Panc1 (cell line): ENCODE measurements at regions of chr13 and their contacts with region 1.

Region 1: DNA sequence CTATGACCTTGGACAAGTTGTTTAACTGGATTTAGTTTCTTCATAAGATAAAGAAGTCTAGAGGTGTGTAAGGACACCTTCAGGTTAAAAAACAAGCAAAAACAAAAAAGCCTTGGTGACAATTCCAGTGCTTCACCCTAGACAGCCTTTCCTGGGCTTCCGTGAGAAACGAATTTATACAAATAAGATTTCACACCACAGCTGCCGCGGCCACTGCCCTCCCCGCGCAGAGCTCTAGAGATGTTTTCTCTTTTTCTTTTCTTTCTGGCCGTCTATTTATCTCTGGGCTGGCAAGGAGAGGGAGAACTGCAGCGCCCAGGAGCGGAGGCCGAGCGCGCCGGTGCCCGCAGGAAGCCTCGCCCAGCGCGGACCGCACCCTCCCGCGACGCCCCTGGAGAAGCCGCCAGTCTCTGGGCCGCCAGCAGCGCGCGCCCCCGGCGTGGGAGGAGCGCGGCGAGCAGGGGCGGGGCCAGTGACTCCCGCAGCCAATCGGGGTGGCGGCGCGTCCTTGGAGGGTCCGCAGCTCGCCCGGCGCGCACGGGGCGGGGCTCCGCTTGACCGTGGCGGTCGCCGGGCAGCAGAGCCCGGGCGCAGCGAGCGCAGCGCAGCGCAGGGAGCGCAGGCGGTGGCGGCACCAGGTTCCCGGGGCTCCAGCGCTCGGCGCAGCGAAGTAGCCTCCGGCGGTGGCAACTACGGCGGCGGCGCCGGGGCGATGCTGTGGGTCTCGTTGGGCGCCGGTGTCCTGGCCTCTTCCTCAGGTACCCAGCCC is 107.0 kb downstream of the RXFP2 start:
- DNase-seq: no peak
- ATAC-seq: peak; percentile 100
- H3K4me3 ChIP-seq: peak overlapping the region; percentile 49 to 53
- H3K27ac ChIP-seq: no peak overlapping the region
- H3K4me1 ChIP-seq: no peaks in the 10 kb centered on the region
- H3K27me3 ChIP-seq: peaks cover 2% of the 10 kb centered on the region; the same call in 1 of the 2 replicates
- CTCF ChIP-seq: no peak

Region 2: GRCh38 chr13:31930901-31931522 is 84.6 kb after region 1 on chr13:
- CTCF ChIA-PET with region 1: no interaction called
- POLR2A ChIA-PET with region 1: no interaction called
- in situ Hi-C with region 1: no loop called
- intact Hi-C with region 1: no loop called
- DNase-seq: no peak
- ATAC-seq: peak; percentile 47
- H3K4me3 ChIP-seq: no peak overlapping the region
- H3K27ac ChIP-seq: peak overlapping the region; percentile 69
- H3K4me1 ChIP-seq: peaks cover 20% of the 10 kb centered on the region
- H3K27me3 ChIP-seq: no peaks in the 10 kb centered on the region
- CTCF ChIP-seq: no peak

Region 3: DNA sequence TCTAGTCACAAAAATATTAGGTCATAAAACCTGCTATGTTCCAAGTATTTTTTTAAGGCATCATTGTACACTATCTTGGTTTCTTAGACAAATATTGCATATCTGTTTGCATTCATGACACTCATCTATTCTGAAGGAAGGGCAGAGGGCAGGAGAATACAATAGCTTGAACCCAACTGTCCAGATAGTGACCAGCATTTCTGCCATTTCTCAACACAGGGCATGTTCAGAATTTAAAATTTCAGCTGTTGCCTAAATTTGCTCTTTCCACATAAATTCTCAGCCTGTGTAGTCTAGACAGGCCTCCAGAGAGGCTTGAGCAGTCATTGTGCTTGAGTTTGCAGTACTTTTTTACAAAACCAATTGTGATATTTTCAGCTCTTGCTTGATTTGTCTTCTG is 349.3 kb after region 1 on chr13:
- CTCF ChIA-PET with region 1: interaction called, 10 read pairs
- POLR2A ChIA-PET with region 1: no interaction called
- in situ Hi-C with region 1: no loop called
- intact Hi-C with region 1: no loop called
- DNase-seq: no peak
- ATAC-seq: no peak
- H3K4me3 ChIP-seq: no peak overlapping the region
- H3K27ac ChIP-seq: no peak overlapping the region
- H3K4me1 ChIP-seq: no peaks in the 10 kb centered on the region
- H3K27me3 ChIP-seq: no peaks in the 10 kb centered on the region
- CTCF ChIP-seq: no peak